ENCODE measurements at regions of chr4 and their contacts with region 1.

Region 1: GRCh38 chr4:15956179-15956850 is 6.7 kb downstream of the FGFBP2 start:
- DNase-seq: peak; percentile 73
- H3K4me3 ChIP-seq: no peak overlapping the region
- H3K27ac ChIP-seq: no peak overlapping the region
- H3K4me1 ChIP-seq: peaks cover 0 to 3% of the 10 kb centered on the region in 2 experiments; a peak in 1 of 4 replicates
- H3K27me3 ChIP-seq: no peaks in the 10 kb centered on the region
- CTCF ChIP-seq: peak; percentile 98
- EP300 ChIP-seq: no peak
- RAD21 ChIP-seq: peak; percentile 92

Region 2: GRCh38 chr4:15778289-15779241 is 177.8 kb before region 1 on chr4 and contains the start of gene CD38:
- CTCF ChIA-PET with region 1: interaction called, 17 read pairs
- POLR2A ChIA-PET with region 1: no interaction called
- DNase-seq: peak; percentile 78
- H3K4me3 ChIP-seq: peak within 1 kb of the TSS; percentile 59 to 66
- H3K27ac ChIP-seq: no peak within 1 kb of the TSS
- H3K4me1 ChIP-seq: peaks cover 0 to 10% of the 10 kb centered on the region in 2 experiments; a peak in 2 of 4 replicates
- H3K27me3 ChIP-seq: peaks cover 21% of the 10 kb centered on the region
- CTCF ChIP-seq: no peak
- EP300 ChIP-seq: no peak
- RAD21 ChIP-seq: no peak
- polyA plus RNA-seq, gene CD38: 0.02 TPM in 1 of 2 replicates, not detected in the other

Region 3: DNA sequence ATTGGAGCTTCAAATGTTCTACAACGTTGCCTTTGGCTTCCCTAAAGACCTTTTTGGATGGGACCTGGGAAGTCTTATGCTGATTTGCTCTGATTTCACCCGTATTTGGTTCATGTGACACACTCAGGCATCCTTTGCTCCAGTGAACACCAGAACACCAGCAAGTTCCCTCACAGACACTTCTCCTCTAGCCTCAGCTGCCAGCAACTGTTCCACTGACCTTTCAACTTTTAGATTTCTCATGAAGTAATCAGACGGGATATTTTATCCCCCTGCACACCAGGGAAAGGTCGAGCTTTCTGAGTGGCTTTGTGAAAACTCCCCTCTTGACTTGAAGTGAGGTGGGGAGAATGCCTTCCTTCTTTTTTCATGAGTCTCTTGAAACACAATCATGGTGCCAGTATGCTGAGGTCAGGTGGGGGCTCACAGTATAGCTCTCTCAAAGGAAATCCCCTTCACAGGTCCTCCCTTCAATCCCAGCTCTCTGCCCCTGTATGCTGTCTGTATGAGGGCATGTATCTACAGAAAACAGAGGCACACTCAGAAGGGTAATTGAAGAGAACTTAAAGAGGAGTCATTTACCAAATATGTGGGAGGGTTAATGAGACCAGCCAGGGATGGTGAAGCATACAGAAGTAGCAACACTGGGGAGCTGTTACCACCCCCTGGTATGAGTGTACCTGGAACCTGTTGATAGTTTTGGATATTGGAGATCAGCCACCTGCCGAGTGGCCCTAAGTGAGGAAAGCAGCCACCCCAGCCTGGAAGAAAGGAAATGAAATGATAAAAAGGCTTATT is 80.5 kb before region 1 on chr4:
- CTCF ChIA-PET with region 1: interaction called, 154 read pairs
- POLR2A ChIA-PET with region 1: no interaction called
- DNase-seq: no peak
- H3K4me3 ChIP-seq: no peak overlapping the region
- H3K27ac ChIP-seq: no peak overlapping the region
- H3K4me1 ChIP-seq: no peaks in the 10 kb centered on the region; a peak in 2 of 4 replicates
- H3K27me3 ChIP-seq: no peaks in the 10 kb centered on the region
- CTCF ChIP-seq: no peak
- EP300 ChIP-seq: no peak
- RAD21 ChIP-seq: no peak

Region 4: DNA sequence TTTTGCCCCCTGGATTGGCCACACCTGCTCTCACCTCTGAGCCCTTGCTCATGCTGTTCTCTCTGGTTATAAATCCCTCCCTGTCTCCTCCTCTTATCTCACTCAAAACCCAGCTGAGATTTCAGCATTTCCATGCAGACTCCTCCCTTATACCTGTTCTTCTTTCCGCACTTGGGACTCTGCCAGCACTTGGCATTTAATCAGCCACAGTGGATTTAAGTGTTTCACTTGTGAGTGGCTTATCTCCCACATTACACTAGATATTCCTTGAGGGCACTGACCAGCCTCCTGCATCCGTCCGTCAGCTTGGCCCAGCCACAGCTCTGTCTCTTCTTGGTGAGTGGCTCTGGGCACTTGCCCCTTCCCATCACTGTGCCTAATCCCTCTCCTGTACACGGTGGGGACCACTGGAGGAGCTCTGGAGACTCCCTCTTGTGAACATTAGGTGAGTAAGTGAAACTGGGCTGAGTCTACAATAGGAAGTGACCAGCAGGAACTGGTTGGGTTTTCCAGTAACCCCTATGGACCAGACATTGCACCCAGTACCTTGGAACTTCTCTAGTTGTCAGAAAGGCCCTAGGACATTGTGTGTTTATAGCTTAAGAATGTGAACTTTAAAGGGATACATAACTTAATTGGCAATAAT is 37.7 kb before region 1 on chr4:
- CTCF ChIA-PET with region 1: interaction called, 23 read pairs
- POLR2A ChIA-PET with region 1: no interaction called
- DNase-seq: peak; percentile 32
- H3K4me3 ChIP-seq: no peak overlapping the region
- H3K27ac ChIP-seq: no peak overlapping the region
- H3K4me1 ChIP-seq: peaks cover 11 to 13% of the 10 kb centered on the region in 2 experiments; a peak in 2 of 4 replicates
- H3K27me3 ChIP-seq: no peaks in the 10 kb centered on the region
- CTCF ChIP-seq: no peak
- EP300 ChIP-seq: no peak
- RAD21 ChIP-seq: no peak

Region 5: DNA sequence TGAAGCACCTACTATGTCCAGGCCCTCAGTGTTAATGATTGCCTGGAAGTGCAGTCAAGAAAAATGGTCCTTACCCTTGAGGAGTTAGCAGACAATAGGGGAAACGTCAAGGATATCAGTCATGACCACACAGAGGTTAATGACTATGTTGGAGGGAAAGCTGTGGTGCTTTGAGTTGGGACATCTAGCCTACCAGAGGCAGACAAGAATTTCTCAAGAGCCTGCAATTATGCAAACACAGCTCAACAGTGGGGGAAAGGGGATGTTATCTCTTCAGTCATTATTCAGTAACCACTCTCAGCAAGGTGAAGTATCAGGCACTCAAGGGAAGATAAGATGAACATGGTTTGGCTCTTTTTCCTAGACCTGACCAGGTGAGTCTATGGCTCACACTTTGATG is 10.8 kb before region 1 on chr4:
- CTCF ChIA-PET with region 1: interaction called, 22 read pairs
- POLR2A ChIA-PET with region 1: no interaction called
- DNase-seq: no peak
- H3K4me3 ChIP-seq: no peak overlapping the region
- H3K27ac ChIP-seq: no peak overlapping the region
- H3K4me1 ChIP-seq: no peaks in the 10 kb centered on the region
- H3K27me3 ChIP-seq: no peaks in the 10 kb centered on the region
- CTCF ChIP-seq: no peak
- EP300 ChIP-seq: no peak
- RAD21 ChIP-seq: no peak

Region 6: DNA sequence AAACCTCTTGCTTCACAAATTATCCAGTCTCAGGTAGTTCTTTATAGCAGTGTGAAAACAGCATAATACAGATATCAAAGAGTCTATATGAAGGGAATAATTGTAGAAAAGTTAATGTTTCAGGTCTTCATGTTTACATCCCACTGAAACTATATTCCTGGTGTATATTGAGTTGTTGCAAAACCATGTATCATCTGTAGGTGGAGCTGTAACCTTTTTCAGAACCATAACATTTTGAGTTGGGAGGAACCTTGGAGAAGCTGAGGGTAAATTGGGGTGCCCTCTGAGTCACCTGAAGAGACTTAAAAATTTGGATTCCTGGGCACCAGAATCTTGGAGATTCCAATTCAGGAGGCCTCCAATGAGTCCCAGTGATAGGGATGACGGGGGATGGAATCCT is 321.9 kb after region 1 on chr4:
- CTCF ChIA-PET with region 1: no interaction called
- POLR2A ChIA-PET with region 1: no interaction called
- DNase-seq: no peak
- H3K4me3 ChIP-seq: no peak overlapping the region
- H3K27ac ChIP-seq: no peak overlapping the region
- H3K4me1 ChIP-seq: no peaks in the 10 kb centered on the region
- H3K27me3 ChIP-seq: no peaks in the 10 kb centered on the region
- CTCF ChIP-seq: peak; percentile 43
- EP300 ChIP-seq: no peak
- RAD21 ChIP-seq: no peak

Region 7: DNA sequence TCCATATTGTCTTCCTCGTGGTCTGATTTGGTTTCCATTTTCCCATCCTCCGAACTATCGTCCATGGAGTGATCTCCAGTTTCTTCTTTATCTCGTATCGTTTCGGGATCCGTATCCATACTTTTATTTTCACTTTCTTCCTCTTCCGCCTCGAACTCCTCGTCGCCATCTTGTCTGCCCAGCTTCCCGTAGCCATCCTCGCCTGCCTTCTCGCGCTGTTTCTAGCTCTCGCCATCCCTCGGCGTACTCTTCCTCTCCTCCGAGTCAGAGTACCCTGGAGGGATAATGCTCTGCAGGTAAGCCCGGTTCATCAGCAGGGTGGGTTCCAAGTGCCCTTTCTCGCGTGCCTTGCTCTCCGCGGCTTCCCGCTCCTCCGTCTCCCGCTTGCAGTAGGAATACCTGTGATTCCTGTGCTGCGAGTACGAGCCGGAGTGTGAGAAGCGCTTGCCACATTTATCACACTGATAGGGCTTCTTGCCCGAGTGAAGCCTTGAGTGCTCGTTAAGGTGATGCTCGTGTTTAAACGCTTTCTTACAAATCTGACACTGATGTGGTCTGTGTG is 404.5 kb after region 1 on chr4:
- CTCF ChIA-PET with region 1: no interaction called
- POLR2A ChIA-PET with region 1: no interaction called
- DNase-seq: no peak
- H3K4me3 ChIP-seq: no peak overlapping the region
- H3K27ac ChIP-seq: no peak overlapping the region
- H3K4me1 ChIP-seq: no peaks in the 10 kb centered on the region
- H3K27me3 ChIP-seq: no peaks in the 10 kb centered on the region
- CTCF ChIP-seq: no peak
- EP300 ChIP-seq: no peak
- RAD21 ChIP-seq: no peak